Posterior vena cava (tissue), 2 donors: ENCODE measurements at regions of chr13 and their contacts with region 1.

Region 1: DNA sequence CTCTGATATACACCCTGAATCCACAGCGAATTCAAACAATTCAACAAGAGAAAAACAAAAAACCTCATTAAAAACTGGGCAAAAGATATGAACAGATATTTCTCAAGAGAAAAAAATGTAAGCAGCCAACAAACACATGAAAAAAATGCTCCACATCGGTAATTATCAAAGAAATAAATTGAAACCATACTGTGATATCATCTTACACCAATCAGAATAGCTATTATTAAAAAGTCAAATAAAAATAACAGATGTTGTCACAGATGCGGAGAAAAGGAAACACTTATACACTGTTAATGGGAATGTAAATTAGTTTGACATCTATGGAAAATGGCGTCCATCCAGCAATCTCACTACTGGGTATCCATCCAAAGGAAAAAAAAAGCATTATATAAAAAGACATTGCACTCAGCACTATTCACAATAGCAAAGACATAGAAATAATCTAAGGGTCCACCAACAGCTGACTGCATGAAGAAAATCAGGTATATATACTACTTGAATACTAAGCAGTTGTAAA is 1495.0 kb upstream of the PCDH20 start:
- DNase-seq: no peak

Region 2: GRCh38 chr13:62613819-62614218 is 296.8 kb before region 1 on chr13:
- intact Hi-C with region 1: no loop called
- DNase-seq: no peak

Region 3: DNA sequence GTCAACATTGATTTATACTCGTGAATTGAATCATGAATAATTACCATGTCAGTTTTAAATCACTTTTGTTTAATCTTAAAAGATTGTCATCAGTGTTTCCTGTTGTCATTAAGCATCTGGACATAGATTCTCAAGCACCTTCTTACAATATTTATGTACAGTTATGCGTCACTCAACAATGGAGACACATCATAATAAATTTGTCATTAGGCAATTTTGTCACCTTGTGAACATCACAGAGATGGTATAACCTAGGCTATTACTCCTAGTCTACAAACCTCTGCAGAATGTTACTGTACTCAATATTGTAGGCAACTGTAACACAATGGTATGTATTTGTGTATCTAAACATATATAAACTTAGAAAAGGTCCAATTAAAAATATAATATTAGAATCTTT is 635.9 kb after region 1 on chr13:
- intact Hi-C with region 1: loop called in 1 of 2 experiments (anchors 5 kb)
- DNase-seq: no peak